Naive thymus-derived CD4-positive, alpha-beta T cell (primary cell): ENCODE measurements at regions of chr1 and their contacts with region 1.

Region 1: GRCh38 chr1:67053785-67054772 is at the start of gene SLC35D1:
- DNase-seq: peak; percentile 65 to 88 (median 76)
- ATAC-seq: peak; percentile 86
- H3K4me3 ChIP-seq: peak within 1 kb of the TSS; percentile 87
- H3K4me3 Mint-ChIP-seq: peak within 1 kb of the TSS; percentile 90 to 97 (median 95)
- H3K27ac ChIP-seq: peak within 1 kb of the TSS; percentile 96
- H3K27ac Mint-ChIP-seq: peak within 1 kb of the TSS; percentile 80 to 99 (median 94)
- H3K4me1 ChIP-seq: peaks cover 6 to 13% of the 10 kb centered on the region in 2 donors
- H3K4me1 Mint-ChIP-seq: peaks cover 17 to 37% (median 30%) of the 10 kb centered on the region in 7 donors
- H3K27me3 ChIP-seq: no peaks in the 10 kb centered on the region
- H3K27me3 Mint-ChIP-seq: peaks cover 0 to 9% (median 0%) of the 10 kb centered on the region in 5 donors
- total RNA-seq, gene SLC35D1: 9.8 to 25.7 (median 15.4) TPM

Region 2: GRCh38 chr1:66924756-66925557 is 129.1 kb before region 1 on chr1 and contains the starts of genes DNAI4 and MIER1:
- CTCF ChIA-PET with region 1: no interaction called
- POLR2A ChIA-PET with region 1: interaction called, 13 read pairs
- intact Hi-C with region 1: loop called (anchors 1 kb)
- DNase-seq: peak; percentile 91 to 98 (median 96)
- ATAC-seq: peak; percentile 97
- H3K4me3 ChIP-seq: peak within 1 kb of the TSS; percentile 83
- H3K4me3 Mint-ChIP-seq: peak within 1 kb of the TSS; percentile 92 to 98 (median 96)
- H3K27ac ChIP-seq: peak within 1 kb of the TSS; percentile 95
- H3K27ac Mint-ChIP-seq: peak within 1 kb of the TSS; percentile 95 to 97 (median 97)
- H3K4me1 ChIP-seq: peaks cover 24 to 37% of the 10 kb centered on the region in 2 donors
- H3K4me1 Mint-ChIP-seq: peaks cover 18 to 75% (median 60%) of the 10 kb centered on the region in 7 donors
- H3K27me3 ChIP-seq: no peaks in the 10 kb centered on the region
- H3K27me3 Mint-ChIP-seq: no peaks in the 10 kb centered on the region
- total RNA-seq, gene DNAI4: 1.3 to 10.7 (median 9.7) TPM
- total RNA-seq, gene MIER1: 51.5 to 73.6 (median 70.9) TPM

Region 3: DNA sequence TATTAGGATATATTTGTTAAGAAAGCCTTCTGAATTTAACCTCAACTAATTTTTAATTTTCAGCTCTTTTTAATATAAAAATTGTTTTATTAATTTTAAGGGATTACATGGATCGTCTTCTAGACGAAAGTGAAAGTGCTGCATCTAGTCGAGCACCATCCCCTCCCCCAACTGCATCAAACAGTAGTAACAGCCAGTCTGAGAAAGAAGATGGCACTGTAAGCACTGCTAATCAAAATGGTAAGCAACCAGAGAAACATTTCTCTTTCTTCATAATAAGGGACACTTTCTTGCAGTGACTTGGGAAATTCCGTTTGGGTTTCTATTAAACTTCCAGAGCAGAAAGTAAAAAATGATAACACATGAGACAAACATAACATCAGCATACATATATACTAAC is 72.4 kb before region 1 on chr1:
- CTCF ChIA-PET with region 1: interaction called, 3 read pairs
- POLR2A ChIA-PET with region 1: no interaction called
- intact Hi-C with region 1: loop called (anchors 5 kb)
- DNase-seq: peak in 7 of 9 donors; percentile 52 to 78 (median 69)
- ATAC-seq: peak; percentile 93
- H3K4me3 ChIP-seq: peak overlapping the region; percentile 22
- H3K4me3 Mint-ChIP-seq: peak overlapping the region; percentile 64 to 84 (median 80)
- H3K27ac ChIP-seq: peak overlapping the region; percentile 78
- H3K27ac Mint-ChIP-seq: peak overlapping the region; percentile 83 to 94 (median 93)
- H3K4me1 ChIP-seq: peaks cover 0 to 8% of the 10 kb centered on the region in 2 donors
- H3K4me1 Mint-ChIP-seq: peaks cover 6 to 48% (median 37%) of the 10 kb centered on the region in 7 donors
- H3K27me3 ChIP-seq: no peaks in the 10 kb centered on the region
- H3K27me3 Mint-ChIP-seq: no peaks in the 10 kb centered on the region

Region 4: GRCh38 chr1:67041841-67042503 is 12.1 kb before region 1 on chr1:
- CTCF ChIA-PET with region 1: no interaction called
- POLR2A ChIA-PET with region 1: interaction called, 10 read pairs
- intact Hi-C with region 1: loop called in 1 of 2 experiments (anchors 1 kb)
- DNase-seq: no peak
- ATAC-seq: no peak
- H3K4me3 ChIP-seq: no peak overlapping the region
- H3K4me3 Mint-ChIP-seq: no peak overlapping the region
- H3K27ac ChIP-seq: no peak overlapping the region
- H3K27ac Mint-ChIP-seq: no peak overlapping the region
- H3K4me1 ChIP-seq: no peaks in the 10 kb centered on the region
- H3K4me1 Mint-ChIP-seq: peaks cover 2 to 36% (median 14%) of the 10 kb centered on the region in 7 donors
- H3K27me3 ChIP-seq: no peaks in the 10 kb centered on the region
- H3K27me3 Mint-ChIP-seq: no peaks in the 10 kb centered on the region

Region 5: DNA sequence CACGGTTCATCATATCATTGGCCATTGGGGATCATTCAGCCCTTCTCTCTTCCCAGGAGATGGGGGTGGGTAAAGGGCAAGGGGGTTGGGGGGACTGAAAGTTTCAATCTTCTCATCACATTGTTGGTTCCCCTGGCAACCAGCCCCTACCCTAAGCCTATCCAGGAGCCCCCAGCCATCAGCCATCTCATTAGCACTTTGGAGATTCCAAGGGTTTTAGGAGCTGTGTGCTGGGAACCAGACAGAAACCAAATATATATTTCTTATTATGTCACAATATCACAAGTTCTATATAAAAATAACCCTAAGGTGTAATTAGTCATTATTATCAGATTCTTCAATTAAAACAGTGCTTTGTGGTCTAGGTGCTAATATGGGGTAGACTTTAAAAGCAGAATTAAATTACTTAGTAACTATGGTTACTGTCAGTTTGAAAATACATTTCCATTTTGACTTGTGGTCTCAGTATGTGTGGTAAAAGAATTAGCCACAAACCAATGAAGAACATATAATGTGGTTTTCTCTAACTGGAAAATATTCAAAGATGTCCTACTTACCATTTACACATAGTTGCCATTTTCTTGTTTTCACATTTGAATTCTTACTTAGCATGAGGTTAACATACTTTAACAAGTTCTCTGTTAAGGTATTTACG is 140.3 kb after region 1 on chr1:
- CTCF ChIA-PET with region 1: no interaction called
- POLR2A ChIA-PET with region 1: no interaction called
- intact Hi-C with region 1: loop called in 1 of 2 experiments (anchors 5 kb)
- DNase-seq: peak in 4 of 9 donors; percentile 19 to 49 (median 31)
- ATAC-seq: peak; percentile 73
- H3K4me3 ChIP-seq: no peak overlapping the region
- H3K4me3 Mint-ChIP-seq: peak overlapping the region in 2 of 10 donors; percentile 15 to 17
- H3K27ac ChIP-seq: no peak overlapping the region
- H3K27ac Mint-ChIP-seq: peak overlapping the region in 1 of 9 donors; percentile 75
- H3K4me1 ChIP-seq: peaks cover 4 to 20% of the 10 kb centered on the region in 2 donors
- H3K4me1 Mint-ChIP-seq: peaks cover 4 to 30% (median 12%) of the 10 kb centered on the region in 7 donors
- H3K27me3 ChIP-seq: no peaks in the 10 kb centered on the region
- H3K27me3 Mint-ChIP-seq: peaks cover 0 to 3% (median 0%) of the 10 kb centered on the region in 5 donors

Region 6: GRCh38 chr1:67307251-67308060 is 253.4 kb after region 1 on chr1 and contains the start of gene IL12RB2:
- CTCF ChIA-PET with region 1: no interaction called
- POLR2A ChIA-PET with region 1: no interaction called
- intact Hi-C with region 1: loop called in 1 of 2 experiments (anchors 10 kb)
- DNase-seq: peak in 7 of 9 donors; percentile 11 to 68 (median 18)
- ATAC-seq: peak; percentile 78
- H3K4me3 ChIP-seq: peak within 1 kb of the TSS; percentile 19
- H3K4me3 Mint-ChIP-seq: peak within 1 kb of the TSS; percentile 76 to 99 (median 84)
- H3K27ac ChIP-seq: no peak within 1 kb of the TSS
- H3K27ac Mint-ChIP-seq: peak within 1 kb of the TSS in 2 of 9 donors; percentile 56 to 99
- H3K4me1 ChIP-seq: peaks cover 0 to 5% of the 10 kb centered on the region in 2 donors
- H3K4me1 Mint-ChIP-seq: peaks cover 0 to 78% (median 9%) of the 10 kb centered on the region in 7 donors
- H3K27me3 ChIP-seq: no peaks in the 10 kb centered on the region
- H3K27me3 Mint-ChIP-seq: peaks cover 0 to 22% (median 10%) of the 10 kb centered on the region in 5 donors
- total RNA-seq, gene IL12RB2: 0.38 to 78.1 (median 1.1) TPM

Region 7: DNA sequence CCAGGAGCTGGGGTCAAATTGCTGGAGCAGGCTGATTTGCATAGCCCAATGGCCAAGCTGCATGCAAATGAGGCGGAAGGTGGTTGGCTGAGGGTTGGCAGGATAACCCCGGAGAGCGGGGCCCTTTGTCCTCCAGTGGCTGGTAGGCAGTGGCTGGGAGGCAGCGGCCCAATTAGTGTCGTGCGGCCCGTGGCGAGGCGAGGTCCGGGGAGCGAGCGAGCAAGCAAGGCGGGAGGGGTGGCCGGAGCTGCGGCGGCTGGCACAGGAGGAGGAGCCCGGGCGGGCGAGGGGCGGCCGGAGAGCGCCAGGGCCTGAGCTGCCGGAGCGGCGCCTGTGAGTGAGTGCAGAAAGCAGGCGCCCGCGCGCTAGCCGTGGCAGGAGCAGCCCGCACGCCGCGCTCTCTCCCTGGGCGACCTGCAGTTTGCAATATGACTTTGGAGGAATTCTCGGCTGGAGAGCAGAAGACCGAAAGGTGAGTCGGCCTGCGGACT is 631.0 kb after region 1 on chr1 and contains the start of gene GADD45A:
- CTCF ChIA-PET with region 1: no interaction called
- POLR2A ChIA-PET with region 1: interaction called, 3 read pairs
- intact Hi-C with region 1: loop called (anchors 5 kb)
- DNase-seq: peak; percentile 80 to 96 (median 94)
- ATAC-seq: peak; percentile 93
- H3K4me3 ChIP-seq: peak within 1 kb of the TSS; percentile 69
- H3K4me3 Mint-ChIP-seq: peak within 1 kb of the TSS; percentile 90 to 99 (median 98)
- H3K27ac ChIP-seq: peak within 1 kb of the TSS; percentile 59
- H3K27ac Mint-ChIP-seq: peak within 1 kb of the TSS; percentile 77 to 98 (median 93)
- H3K4me1 ChIP-seq: peaks cover 9 to 16% of the 10 kb centered on the region in 2 donors
- H3K4me1 Mint-ChIP-seq: peaks cover 20 to 42% (median 26%) of the 10 kb centered on the region in 7 donors
- H3K27me3 ChIP-seq: no peaks in the 10 kb centered on the region
- H3K27me3 Mint-ChIP-seq: no peaks in the 10 kb centered on the region
- total RNA-seq, gene GADD45A: 15.0 to 70.4 (median 24.2) TPM

Region 8: GRCh38 chr1:67970088-67970487 is 916.0 kb after region 1 on chr1:
- CTCF ChIA-PET with region 1: no interaction called
- POLR2A ChIA-PET with region 1: no interaction called
- intact Hi-C with region 1: no loop called
- DNase-seq: no peak
- ATAC-seq: no peak
- H3K4me3 ChIP-seq: no peak overlapping the region
- H3K4me3 Mint-ChIP-seq: no peak overlapping the region
- H3K27ac ChIP-seq: no peak overlapping the region
- H3K27ac Mint-ChIP-seq: no peak overlapping the region
- H3K4me1 ChIP-seq: no peaks in the 10 kb centered on the region
- H3K4me1 Mint-ChIP-seq: no peaks in the 10 kb centered on the region
- H3K27me3 ChIP-seq: no peaks in the 10 kb centered on the region
- H3K27me3 Mint-ChIP-seq: peaks cover 0 to 6% (median 3%) of the 10 kb centered on the region in 5 donors